GM12878 (cell line): ENCODE measurements at regions of chrX and their contacts with region 1.

Region 1: GRCh38 chrX:27555514-27555913 is 34.6 kb upstream of the DCAF8L2 start:
- DNase-seq: no peak
- ATAC-seq: peak; percentile 68; the same call in 2 of the 3 replicates
- H3K4me3 ChIP-seq: no peak overlapping the region
- H3K27ac ChIP-seq: no peak overlapping the region
- H3K4me1 ChIP-seq: no peaks in the 10 kb centered on the region
- H3K27me3 ChIP-seq: no peaks in the 10 kb centered on the region
- CTCF ChIP-seq: peak; percentile 34 to 49 (median 41); a peak in 4 of 6 replicates
- EP300 ChIP-seq: no peak
- POLR2A ChIP-seq: no peak
- RAD21 ChIP-seq: peak; percentile 48

Region 2: DNA sequence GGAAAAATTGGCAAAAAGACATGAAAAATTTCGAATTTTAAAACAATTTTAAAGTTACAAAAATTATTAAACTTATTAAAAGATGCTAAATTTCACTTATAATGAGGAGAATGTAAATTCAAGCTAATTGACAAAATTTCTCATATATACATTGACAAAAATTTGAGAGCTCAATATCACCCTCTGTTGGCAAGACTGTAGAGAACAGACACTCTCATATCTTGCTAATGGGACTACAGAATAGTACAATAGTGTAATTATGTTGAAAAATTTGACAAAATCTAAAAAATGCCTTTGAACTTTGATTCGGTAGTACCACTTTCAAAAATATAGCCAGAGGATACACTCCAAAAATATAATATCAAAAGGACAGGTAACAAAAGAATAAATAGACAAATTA is 64.5 kb after region 1 on chrX:
- CTCF ChIA-PET with region 1: interaction called, 41 read pairs
- POLR2A ChIA-PET with region 1: no interaction called
- RAD21 ChIA-PET with region 1: interaction called, 3 read pairs
- SMC1A ChIA-PET with region 1: interaction called, 15 read pairs
- in situ Hi-C with region 1: no loop called
- intact Hi-C with region 1: no loop called
- DNase-seq: no peak
- ATAC-seq: peak; percentile 72
- H3K4me3 ChIP-seq: no peak overlapping the region
- H3K27ac ChIP-seq: no peak overlapping the region
- H3K4me1 ChIP-seq: no peaks in the 10 kb centered on the region
- H3K27me3 ChIP-seq: no peaks in the 10 kb centered on the region
- CTCF ChIP-seq: peak; percentile 36 to 39 (median 36); a peak in 3 of 6 replicates
- EP300 ChIP-seq: no peak
- POLR2A ChIP-seq: no peak
- RAD21 ChIP-seq: no peak

Region 3: GRCh38 chrX:27679281-27679680 is 123.8 kb after region 1 on chrX:
- CTCF ChIA-PET with region 1: interaction called, 12 read pairs
- POLR2A ChIA-PET with region 1: no interaction called
- RAD21 ChIA-PET with region 1: interaction called, 4 read pairs
- SMC1A ChIA-PET with region 1: interaction called, 10 read pairs
- in situ Hi-C with region 1: no loop called
- intact Hi-C with region 1: loop called (anchors 2 kb)
- DNase-seq: no peak
- ATAC-seq: no peak
- H3K4me3 ChIP-seq: no peak overlapping the region
- H3K27ac ChIP-seq: no peak overlapping the region
- H3K4me1 ChIP-seq: no peaks in the 10 kb centered on the region
- H3K27me3 ChIP-seq: no peaks in the 10 kb centered on the region
- CTCF ChIP-seq: no peak
- EP300 ChIP-seq: no peak
- POLR2A ChIP-seq: no peak
- RAD21 ChIP-seq: no peak